ENCODE measurements at regions of chr1 and their contacts with region 1.

Region 1: GRCh38 chr1:110619412-110620249 is 13.5 kb upstream of the KCNA2 start:
- H3K4me3 ChIP-seq: no peak overlapping the region
- H3K27ac ChIP-seq: no peak overlapping the region
- H3K4me1 ChIP-seq: no peaks in the 10 kb centered on the region
- CTCF ChIP-seq: peak; percentile 89; the same call in 1 of the 2 replicates

Region 2: DNA sequence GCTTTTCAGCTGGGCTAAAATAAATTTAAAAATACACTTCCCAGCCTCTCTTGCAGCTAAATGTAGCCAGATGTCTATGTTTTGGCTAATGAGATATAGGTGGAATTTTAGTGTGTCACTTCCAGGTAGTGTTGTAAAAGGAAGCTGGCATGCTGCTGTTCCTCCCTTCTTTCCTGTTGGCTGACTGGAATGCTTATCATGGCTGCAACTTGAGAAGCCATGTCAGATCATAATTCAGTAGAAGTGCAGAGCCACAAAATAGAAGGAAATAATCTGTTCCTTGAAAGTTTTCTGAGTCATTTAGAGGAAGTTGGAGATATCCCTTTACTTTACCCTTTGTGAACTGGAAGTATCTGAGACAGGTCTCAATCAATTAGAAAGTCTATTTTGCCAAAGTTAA is 291.4 kb before region 1 on chr1:
- CTCF ChIA-PET with region 1: no interaction called
- POLR2A ChIA-PET with region 1: no interaction called
- H3K4me3 ChIP-seq: no peak overlapping the region
- H3K27ac ChIP-seq: no peak overlapping the region
- H3K4me1 ChIP-seq: no peaks in the 10 kb centered on the region
- CTCF ChIP-seq: no peak

Region 3: DNA sequence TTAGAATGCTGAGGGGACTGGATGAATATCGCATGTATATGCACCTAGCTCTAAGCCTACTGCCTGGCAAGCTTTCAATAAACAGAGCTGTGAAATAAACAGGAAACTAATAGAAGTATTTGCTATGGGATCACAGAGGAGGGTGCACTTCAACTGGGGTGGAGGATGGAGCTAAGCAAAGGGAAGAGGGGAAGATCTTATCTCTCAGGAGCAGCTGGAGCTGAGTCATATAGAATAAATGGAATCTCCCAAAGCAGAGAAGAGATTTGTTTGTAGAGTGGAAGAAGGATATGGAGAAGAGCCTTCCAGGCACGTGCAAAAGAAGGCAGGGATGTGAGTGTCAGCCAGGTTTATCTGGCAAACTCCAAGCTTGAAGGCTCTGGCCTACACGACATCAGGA is 83.6 kb before region 1 on chr1:
- CTCF ChIA-PET with region 1: interaction called, 14 read pairs
- POLR2A ChIA-PET with region 1: no interaction called
- H3K4me3 ChIP-seq: no peak overlapping the region
- H3K27ac ChIP-seq: no peak overlapping the region
- H3K4me1 ChIP-seq: no peaks in the 10 kb centered on the region
- CTCF ChIP-seq: no peak

Region 4: DNA sequence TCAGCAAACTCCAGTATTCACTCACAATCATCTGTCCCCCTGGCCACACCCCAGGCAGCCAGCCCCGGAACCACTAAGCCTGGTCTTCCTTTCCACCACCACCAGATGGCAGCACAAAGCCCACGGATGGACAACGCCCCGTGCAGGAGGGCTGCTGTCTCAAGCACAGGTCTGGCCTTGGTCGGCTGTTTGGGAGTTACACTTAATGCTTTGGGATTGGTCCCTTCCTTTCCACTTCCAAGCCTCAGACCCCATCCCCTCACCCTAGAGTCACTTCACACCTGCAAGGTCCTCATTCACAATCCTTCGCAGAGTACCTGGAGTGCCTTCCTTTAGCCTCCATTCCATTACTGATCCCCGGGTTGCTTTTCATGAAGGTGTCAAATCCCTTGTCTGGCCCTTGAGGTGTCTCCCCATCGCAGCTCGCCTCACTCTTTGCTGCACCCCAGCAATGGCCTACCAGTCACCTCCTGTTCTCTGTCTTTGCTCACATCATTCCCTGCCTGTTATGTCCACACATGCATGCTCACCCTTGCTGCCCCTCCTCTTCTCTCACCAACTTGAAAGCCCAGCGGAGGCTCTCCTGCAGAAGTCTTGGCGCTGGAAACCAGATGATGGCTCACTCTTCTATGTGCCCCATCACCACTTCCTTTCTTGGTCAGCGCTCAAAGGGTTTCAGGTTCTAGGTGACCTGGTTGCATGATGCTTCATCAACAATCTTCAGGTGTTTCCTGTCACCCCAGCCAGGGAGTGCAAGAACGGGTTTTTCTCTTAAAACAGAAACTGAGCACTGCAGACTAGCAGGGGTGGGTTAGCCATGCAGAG is 11.4 kb after region 1 on chr1:
- CTCF ChIA-PET with region 1: interaction called, 25 read pairs
- POLR2A ChIA-PET with region 1: no interaction called
- H3K4me3 ChIP-seq: no peak overlapping the region
- H3K27ac ChIP-seq: no peak overlapping the region
- H3K4me1 ChIP-seq: no peaks in the 10 kb centered on the region
- CTCF ChIP-seq: peak; percentile 75

Region 5: DNA sequence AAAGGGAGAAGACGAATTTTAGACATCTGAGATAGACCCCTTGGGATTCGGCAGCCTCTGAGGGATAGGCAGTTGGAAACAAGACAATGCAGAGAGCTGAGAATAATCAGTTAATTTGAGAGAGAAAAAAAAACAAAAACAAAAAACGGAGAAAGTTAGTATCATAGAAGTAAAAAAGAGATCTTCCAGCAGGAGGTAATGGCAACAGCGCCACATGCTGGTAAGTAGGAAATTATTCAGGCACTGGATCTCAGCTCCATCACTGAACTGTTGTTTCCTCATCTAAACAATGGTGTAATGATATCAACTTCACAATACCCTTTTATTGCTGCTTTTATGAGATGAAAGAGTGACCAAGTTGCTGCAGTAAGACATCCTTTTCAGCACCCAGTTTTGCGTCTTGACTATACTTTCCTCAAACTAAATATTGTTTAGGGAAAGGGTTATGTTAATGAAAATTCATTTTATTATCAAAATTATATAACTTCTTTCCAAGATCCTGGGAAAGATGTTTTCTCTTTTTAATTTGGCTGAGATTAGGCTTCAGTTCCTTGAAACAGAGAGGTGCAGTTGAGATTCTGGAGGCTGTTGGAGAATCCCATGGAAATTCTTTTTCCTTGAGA is 146.5 kb after region 1 on chr1:
- CTCF ChIA-PET with region 1: interaction called, 95 read pairs
- POLR2A ChIA-PET with region 1: no interaction called
- H3K4me3 ChIP-seq: no peak overlapping the region
- H3K27ac ChIP-seq: no peak overlapping the region
- H3K4me1 ChIP-seq: no peaks in the 10 kb centered on the region
- CTCF ChIP-seq: peak; percentile 77; the same call in 1 of the 2 replicates

Region 6: GRCh38 chr1:110780600-110781484 is 161.2 kb after region 1 on chr1:
- CTCF ChIA-PET with region 1: interaction called, 159 read pairs
- POLR2A ChIA-PET with region 1: no interaction called
- H3K4me3 ChIP-seq: no peak overlapping the region
- H3K27ac ChIP-seq: no peak overlapping the region
- H3K4me1 ChIP-seq: no peaks in the 10 kb centered on the region
- CTCF ChIP-seq: peak; percentile 64; the same call in 1 of the 2 replicates